ENCODE measurements at regions of chr5 and their contacts with region 1.

Region 1: DNA sequence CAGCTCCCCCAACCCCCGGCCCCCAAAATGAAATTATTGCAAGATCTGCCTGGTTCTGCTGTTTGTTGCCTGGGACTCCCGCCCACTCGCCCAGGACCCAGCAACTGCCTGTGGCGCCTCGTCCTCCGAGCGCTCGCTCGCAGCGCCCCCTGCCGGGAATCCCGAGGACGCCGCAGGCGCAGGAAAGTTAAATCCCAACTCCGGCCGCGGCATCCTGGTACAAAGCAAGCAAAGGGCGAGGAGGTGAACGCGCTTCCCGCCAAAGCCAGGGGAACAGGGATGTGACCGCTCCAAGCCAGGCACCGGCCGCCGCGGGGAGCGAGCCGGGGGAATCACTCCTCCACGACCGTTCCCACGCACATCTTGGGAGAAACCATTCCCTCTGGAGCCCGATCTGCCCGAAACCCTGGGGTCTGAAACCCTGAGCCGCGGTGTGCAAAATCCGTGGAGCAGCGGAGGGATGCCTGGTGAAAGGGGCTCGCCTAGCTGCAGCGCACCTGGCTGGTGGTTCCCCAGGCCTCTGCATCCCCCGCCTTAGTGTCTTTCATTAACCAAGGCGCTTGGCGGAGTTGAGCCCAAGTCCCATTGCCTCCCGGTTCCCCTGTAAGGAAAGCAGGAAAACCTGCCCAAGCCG is 1.3 kb downstream of the SEMA5A start:
- DNase-seq: peak; percentile 65 to 89
- H3K4me3 ChIP-seq: peak overlapping the region; percentile 81 to 82
- H3K27ac ChIP-seq: peak overlapping the region; percentile 60 to 92
- H3K4me1 ChIP-seq: peaks cover 0 to 36% (median 18%) of the 10 kb centered on the region in 4 donors
- H3K27me3 ChIP-seq: no peaks in the 10 kb centered on the region
- CTCF ChIP-seq: peak; percentile 87 to 92

Region 2: DNA sequence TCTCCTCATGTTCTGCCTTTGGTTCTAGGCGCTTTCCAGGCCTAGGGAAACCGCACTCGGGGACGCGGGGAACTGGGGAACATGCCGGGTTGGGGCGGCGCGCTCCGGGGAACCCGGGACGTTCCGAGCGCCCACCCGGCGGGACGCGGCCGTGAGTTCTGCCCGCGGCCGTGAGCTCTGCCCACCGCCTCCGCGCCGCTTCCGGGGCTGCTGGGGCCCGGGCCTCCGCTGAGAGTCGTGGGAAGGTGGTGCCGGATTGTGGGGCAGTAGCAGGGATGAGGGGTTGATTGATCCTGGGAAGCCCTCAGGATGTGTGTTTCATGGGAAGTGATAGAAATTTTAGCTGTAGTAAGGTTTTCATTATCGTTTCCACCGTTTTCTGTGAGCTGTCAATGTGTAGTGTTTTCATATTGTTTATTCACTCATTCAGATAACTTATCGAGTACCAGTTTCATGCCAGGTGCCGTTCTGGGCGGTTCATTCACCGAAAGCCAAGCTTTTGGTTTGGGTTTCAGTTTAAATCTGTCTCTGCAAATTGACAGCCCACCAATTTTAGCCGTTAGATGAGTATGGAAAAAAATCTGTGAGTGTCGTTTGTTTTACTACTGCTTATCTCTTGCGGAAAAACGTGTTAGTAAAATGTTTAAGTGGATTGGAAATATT is 1675.0 kb before region 1 on chr5:
- intact Hi-C with region 1: loop called (anchors 10 kb)
- DNase-seq: no peak
- H3K4me3 ChIP-seq: peak overlapping the region; percentile 87 to 93
- H3K27ac ChIP-seq: peak overlapping the region; percentile 83 to 84
- H3K4me1 ChIP-seq: peaks cover 0 to 28% (median 19%) of the 10 kb centered on the region in 4 donors
- H3K27me3 ChIP-seq: no peaks in the 10 kb centered on the region
- CTCF ChIP-seq: no peak

Region 3: GRCh38 chr5:9361835-9362234 is 182.8 kb before region 1 on chr5:
- intact Hi-C with region 1: loop called (anchors 5 kb)
- DNase-seq: no peak
- H3K4me3 ChIP-seq: no peak overlapping the region
- H3K27ac ChIP-seq: no peak overlapping the region
- H3K4me1 ChIP-seq: peaks cover 0 to 14% (median 0%) of the 10 kb centered on the region in 4 donors
- H3K27me3 ChIP-seq: no peaks in the 10 kb centered on the region
- CTCF ChIP-seq: peak; percentile 20 to 31

Measured in tibial artery (tissue), 4 donors.